Activated naive CD8-positive, alpha-beta T cell treated with anti-CD3 and anti-CD28 coated beads, Interleukin-2, amount 10 ng/mL, durations not matched to agents 7 days and 5 days (primary cell): ENCODE measurements at regions of chr1 and their contacts with region 1.

Region 1: GRCh38 chr1:226940029-226940805 is at the start of gene COQ8A:
- DNase-seq: peak; percentile 99
- ATAC-seq: peak; percentile 97
- H3K4me3 Mint-ChIP-seq: peak within 1 kb of the TSS; percentile 86
- H3K27ac Mint-ChIP-seq: peak within 1 kb of the TSS; percentile 96
- H3K4me1 Mint-ChIP-seq: peaks cover 23% of the 10 kb centered on the region
- H3K27me3 Mint-ChIP-seq: peaks cover 2% of the 10 kb centered on the region
- total RNA-seq, gene COQ8A: 28.6 to 30.2 TPM

Region 2: DNA sequence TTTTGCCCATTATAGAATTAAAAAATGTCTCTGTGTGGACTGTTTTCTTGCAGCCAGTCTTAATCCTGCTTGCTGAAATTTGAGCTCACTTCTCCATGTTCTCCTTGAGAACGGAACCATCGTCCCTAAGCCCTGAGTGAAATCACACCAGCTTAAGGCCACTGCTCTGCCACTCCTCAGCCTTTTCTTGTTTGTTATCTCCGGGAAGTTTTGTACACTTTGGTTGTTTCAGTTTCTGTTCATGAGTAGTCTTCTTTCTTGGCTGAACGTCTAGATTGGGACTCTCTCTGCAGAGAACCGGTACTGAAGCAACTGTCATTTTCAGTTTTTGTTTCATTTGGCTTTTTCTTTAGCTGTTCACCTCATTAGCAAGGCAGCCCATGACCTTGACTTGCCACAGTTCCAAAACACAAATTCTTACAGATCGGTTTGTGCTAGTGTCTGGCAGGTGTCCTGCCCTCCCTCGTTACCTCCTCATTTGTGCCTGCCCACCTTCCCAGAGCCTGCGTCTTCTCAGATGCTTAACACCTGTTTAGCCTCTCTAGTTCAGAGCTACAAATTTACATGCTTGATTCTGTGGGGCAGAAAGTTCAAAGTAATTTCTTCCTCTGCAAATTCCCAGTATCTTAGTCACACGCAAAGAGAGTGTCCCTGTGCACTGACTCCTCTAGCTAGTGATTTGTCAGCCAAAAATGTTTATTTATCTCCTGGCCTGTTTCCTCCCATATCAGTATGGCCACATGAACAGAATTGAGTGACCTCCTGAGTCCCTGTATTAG is 57.4 kb before region 1 on chr1:
- POLR2A ChIA-PET with region 1: interaction called, 69 read pairs
- DNase-seq: peak; percentile 48
- ATAC-seq: peak; percentile 90
- H3K4me3 Mint-ChIP-seq: peak overlapping the region; percentile 73
- H3K27ac Mint-ChIP-seq: peak overlapping the region; percentile 94
- H3K4me1 Mint-ChIP-seq: peaks cover 42% of the 10 kb centered on the region
- H3K27me3 Mint-ChIP-seq: no peaks in the 10 kb centered on the region